ENCODE measurements at regions of chr20 and their contacts with region 1.

Region 1: GRCh38 chr20:5191829-5192569 is 65.2 kb downstream of the CDS2 start:
- DNase-seq: peak; percentile 17
- H3K4me3 Mint-ChIP-seq: no peak overlapping the region
- H3K27ac Mint-ChIP-seq: peak overlapping the region; percentile 73
- H3K4me1 Mint-ChIP-seq: peaks cover 20% of the 10 kb centered on the region
- H3K27me3 Mint-ChIP-seq: no peaks in the 10 kb centered on the region

Region 2: GRCh38 chr20:5056801-5057599 is 135.0 kb before region 1 on chr20:
- intact Hi-C with region 1: loop called (anchors 2 kb)
- DNase-seq: peak; percentile 69
- H3K4me3 Mint-ChIP-seq: peak overlapping the region; percentile 47
- H3K27ac Mint-ChIP-seq: peak overlapping the region; percentile 87
- H3K4me1 Mint-ChIP-seq: peaks cover 25% of the 10 kb centered on the region
- H3K27me3 Mint-ChIP-seq: peaks cover 3% of the 10 kb centered on the region

Region 3: DNA sequence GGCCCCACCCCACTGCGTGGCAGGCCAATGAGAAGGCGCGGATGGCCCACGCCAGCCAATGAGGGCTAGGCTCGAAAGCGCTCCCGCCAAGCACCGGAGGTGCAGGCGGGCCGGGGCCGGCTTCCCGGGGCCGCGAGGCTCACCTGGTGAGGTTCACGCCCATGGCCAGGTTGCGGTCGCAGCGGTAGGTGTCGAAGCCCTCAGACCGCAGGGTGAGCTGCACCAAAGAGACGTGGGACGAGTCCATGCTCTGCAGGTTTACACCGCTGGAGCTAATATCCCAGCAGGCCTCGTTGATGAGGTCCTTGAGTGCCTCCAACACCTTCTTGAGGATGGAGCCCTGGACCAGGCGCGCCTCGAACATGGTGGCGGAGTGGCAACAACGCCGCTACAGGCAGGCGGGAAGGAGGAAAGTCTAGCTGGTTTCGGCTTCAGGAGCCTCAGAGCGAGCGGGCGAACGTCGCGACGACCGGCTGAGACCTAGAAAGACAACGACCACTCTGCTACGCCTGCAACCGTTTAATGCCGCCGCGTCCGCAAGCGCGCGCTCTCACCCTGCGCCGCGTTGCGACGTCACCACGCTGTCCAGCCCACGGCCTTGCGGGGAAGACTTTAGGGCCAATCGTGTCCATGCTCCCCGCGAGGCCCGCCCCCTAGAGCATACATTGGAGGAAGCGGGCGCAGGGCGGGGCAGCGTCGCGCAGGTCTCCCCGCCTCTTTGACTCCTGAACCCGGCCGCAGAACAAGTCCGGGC is 72.4 kb before region 1 on chr20 and contains the start of gene PCNA:
- intact Hi-C with region 1: loop called (anchors 1 kb)
- DNase-seq: peak; percentile 98
- H3K4me3 Mint-ChIP-seq: peak within 1 kb of the TSS; percentile 96
- H3K27ac Mint-ChIP-seq: peak within 1 kb of the TSS; percentile 97
- H3K4me1 Mint-ChIP-seq: peaks cover 62% of the 10 kb centered on the region
- H3K27me3 Mint-ChIP-seq: no peaks in the 10 kb centered on the region
- total RNA-seq, gene PCNA: 512 and 519 TPM in 2 replicates

Region 4: GRCh38 chr20:5141615-5142014 is 50.4 kb before region 1 on chr20:
- intact Hi-C with region 1: loop called (anchors 5 kb)
- DNase-seq: no peak
- H3K4me3 Mint-ChIP-seq: no peak overlapping the region
- H3K27ac Mint-ChIP-seq: peak overlapping the region; percentile 13
- H3K4me1 Mint-ChIP-seq: peaks cover 35% of the 10 kb centered on the region
- H3K27me3 Mint-ChIP-seq: no peaks in the 10 kb centered on the region

Region 5: GRCh38 chr20:5181956-5182355 is 10.0 kb before region 1 on chr20:
- intact Hi-C with region 1: no loop called
- DNase-seq: no peak
- H3K4me3 Mint-ChIP-seq: no peak overlapping the region
- H3K27ac Mint-ChIP-seq: no peak overlapping the region
- H3K4me1 Mint-ChIP-seq: no peaks in the 10 kb centered on the region
- H3K27me3 Mint-ChIP-seq: no peaks in the 10 kb centered on the region